ENCODE measurements at regions of chr2 and their contacts with region 1.

Region 1: GRCh38 chr2:212892193-212892592 is 259.2 kb downstream of the IKZF2 start:
- DNase-seq: no peak
- ATAC-seq: no peak

Region 2: DNA sequence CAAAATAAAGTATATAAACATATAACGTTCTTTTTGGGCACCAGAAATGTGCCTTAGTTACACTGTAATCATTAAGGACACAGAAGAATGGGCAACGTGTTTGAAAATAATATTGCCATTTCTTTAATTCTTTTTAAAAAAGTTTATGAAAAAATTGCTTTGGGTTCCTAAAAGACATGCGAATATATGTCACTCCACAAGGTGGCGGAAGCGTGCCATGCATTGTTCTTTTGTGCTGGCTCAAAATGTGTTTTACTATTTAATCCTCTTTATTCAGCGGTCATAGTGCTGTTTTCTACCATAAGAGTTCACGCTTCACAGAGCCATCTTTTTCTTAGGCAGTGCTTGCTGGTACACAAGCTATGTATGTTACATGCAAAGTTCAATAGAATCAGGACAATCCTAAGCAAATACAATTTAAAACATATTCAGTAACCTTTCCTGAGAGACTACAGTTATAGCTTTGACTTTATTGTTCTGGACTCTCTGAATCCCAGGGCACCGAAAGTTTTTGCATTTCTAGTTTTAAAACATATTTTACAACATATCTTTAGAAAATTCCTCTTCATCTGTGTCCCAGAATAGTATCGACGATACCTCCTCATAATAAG is 205.8 kb before region 1 on chr2:
- intact Hi-C with region 1: loop called (anchors 5 kb)
- DNase-seq: peak; percentile 63
- ATAC-seq: no peak

Region 3: DNA sequence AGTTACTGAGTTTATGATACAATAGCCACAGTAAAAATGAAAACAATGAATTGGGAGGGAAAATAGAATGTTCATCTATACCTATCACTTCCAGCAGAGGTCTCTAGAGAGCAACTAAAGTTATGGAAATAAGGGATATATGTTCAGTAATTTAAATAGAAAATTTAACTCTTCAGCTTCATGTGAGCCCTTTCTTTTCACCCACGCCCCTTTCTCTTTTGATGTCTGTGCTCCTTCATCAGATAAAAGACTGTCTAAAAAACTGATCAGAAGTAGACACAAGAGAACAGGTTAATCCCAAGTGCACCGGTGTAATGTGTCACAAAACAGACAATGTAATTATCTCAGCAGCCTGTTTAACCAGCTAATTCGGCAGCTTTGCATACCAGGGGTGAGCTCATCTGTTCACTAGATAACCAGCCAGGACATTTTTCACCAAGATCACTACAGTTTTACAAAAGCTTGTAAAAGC is 115.1 kb before region 1 on chr2:
- intact Hi-C with region 1: loop called (anchors 10 kb)
- DNase-seq: no peak
- ATAC-seq: no peak

Region 4: GRCh38 chr2:212926940-212927339 is 34.7 kb after region 1 on chr2:
- intact Hi-C with region 1: no loop called
- DNase-seq: peak; percentile 74
- ATAC-seq: peak; percentile 79

Region 5: GRCh38 chr2:212940816-212941215 is 48.6 kb after region 1 on chr2:
- intact Hi-C with region 1: no loop called
- DNase-seq: no peak
- ATAC-seq: no peak